Transverse colon (tissue), 4 donors: ENCODE measurements at regions of chr12 and their contacts with region 1.

Region 1: DNA sequence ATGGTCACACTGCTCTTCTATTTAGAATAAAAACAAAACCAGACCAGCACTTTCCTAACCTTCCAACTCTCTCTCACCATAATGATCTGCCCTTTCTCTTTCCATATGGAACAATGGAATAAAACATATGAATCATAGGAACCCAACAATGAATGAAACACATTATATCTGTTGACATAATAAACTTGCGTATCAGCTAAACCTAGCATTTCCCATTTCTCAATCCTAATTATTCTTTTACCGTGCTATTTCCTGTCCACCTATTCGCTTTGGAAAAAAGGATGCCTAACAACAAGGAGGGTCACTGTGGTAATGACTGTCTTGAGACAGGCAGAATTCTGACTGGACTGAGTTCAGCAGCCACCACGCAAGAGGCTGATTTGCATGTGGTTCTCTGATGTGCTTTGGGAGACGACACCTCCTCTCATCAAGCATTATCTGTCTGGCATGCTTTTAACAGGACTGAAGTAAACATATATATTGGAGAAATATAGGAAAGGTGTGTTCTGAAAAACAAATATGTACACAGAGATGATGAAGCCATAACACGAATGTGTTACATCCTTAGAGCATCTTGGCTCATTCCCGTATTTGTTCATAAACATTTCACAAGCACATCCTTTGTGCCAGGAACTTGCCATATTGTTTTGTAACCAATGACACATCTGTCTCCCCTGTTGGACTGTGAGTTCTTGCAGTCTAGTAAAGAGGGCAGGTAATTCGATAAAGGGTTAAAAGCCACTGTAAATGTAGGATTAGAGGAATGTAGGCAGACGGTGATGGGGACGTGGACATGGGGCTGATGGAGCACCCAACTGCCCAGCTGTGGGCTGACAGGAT is 87.7 kb downstream of the PTPRB start:
- DNase-seq: no peak
- H3K4me3 ChIP-seq: no peak overlapping the region
- H3K27ac ChIP-seq: no peak overlapping the region
- H3K4me1 ChIP-seq: no peaks in the 10 kb centered on the region
- H3K27me3 ChIP-seq: no peaks in the 10 kb centered on the region
- CTCF ChIP-seq: no peak
- EP300 ChIP-seq: no peak
- POLR2A ChIP-seq: no peak

Region 2: GRCh38 chr12:70214972-70215617 is 334.5 kb before region 1 on chr12:
- in situ Hi-C with region 1: loop called in 1 of 4 experiments (anchors 25 kb)
- intact Hi-C with region 1: no loop called
- DNase-seq: no peak
- H3K4me3 ChIP-seq: no peak overlapping the region
- H3K27ac ChIP-seq: no peak overlapping the region
- H3K4me1 ChIP-seq: no peaks in the 10 kb centered on the region
- H3K27me3 ChIP-seq: no peaks in the 10 kb centered on the region
- CTCF ChIP-seq: no peak
- EP300 ChIP-seq: no peak
- POLR2A ChIP-seq: no peak